ENCODE measurements at regions of chr7 and their contacts with region 1.

Region 1: DNA sequence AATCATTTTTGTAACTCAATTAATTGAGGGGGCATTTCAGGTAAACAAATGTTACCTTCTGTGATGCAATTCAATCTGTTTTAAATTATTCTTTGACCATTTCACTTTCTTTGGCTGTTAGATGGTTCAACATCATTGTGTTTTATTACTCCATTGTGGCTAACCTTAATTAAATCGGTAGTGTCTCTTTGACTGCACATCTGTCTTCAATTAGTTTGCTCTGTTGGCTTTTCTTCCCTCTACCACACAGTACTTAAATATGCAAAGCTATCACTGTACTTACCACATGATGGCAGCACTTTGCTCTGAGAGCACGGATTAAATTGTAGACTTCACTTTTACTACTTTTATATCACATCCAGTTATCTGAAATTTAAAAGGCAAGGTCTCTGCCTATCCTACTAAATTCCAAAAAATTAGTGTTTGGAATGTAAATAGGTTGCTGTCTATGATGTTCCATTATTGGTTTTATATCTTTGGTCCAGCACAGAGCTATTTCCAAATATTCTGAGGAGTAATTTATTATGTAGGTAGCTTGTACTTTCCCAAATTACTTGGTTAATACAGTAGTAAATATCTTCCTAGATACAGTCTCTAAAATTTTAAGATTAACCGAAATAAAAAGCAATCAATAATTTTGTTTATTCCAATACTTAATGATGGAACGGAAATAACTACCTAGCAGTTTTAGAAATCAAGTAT is 352.0 kb downstream of the PCLO start:
- DNase-seq: peak; percentile 15
- CTCF ChIP-seq: peak; percentile 74

Region 2: DNA sequence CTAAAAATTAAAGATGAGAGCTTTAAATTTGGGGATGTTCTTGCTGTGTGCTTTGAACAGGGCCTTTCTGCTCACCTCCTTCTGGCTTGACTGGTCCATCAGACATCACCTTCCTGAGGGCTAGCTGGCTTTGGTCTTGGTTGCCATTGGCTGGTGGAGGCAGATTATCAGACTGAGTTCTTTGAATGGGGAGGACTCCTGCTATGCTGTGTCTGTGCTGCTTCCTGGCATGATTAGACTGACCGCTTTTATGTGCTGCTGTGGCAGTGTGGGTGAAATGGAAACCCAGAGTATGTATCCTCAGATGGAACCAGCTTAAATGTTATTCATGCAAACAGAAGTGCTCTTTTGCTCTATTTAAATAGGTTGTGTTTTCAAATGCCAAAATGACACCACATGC is 10.3 kb after region 1 on chr7:
- CTCF ChIA-PET with region 1: interaction called, 19 read pairs
- POLR2A ChIA-PET with region 1: no interaction called
- DNase-seq: no peak
- CTCF ChIP-seq: no peak

Region 3: DNA sequence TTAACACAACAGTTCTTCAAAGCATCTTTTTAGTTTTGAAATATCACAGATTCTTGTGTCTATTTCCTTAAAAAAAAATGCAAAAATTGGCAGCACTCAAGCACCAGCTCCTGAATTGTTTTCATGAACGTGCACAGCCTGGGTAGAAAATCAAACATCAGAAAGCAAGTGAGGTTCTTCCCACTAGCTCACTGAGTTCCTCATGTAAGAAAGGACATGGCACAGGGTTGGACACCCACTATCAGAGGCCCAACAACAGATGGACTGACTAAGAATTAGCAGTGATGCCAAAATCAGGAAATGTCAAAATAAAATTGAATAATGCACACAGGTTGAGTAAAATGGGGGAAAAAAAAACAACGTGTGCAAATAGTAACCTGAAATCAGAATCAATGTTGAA is 205.2 kb after region 1 on chr7:
- CTCF ChIA-PET with region 1: no interaction called
- POLR2A ChIA-PET with region 1: no interaction called
- DNase-seq: no peak
- CTCF ChIP-seq: no peak

Region 4: DNA sequence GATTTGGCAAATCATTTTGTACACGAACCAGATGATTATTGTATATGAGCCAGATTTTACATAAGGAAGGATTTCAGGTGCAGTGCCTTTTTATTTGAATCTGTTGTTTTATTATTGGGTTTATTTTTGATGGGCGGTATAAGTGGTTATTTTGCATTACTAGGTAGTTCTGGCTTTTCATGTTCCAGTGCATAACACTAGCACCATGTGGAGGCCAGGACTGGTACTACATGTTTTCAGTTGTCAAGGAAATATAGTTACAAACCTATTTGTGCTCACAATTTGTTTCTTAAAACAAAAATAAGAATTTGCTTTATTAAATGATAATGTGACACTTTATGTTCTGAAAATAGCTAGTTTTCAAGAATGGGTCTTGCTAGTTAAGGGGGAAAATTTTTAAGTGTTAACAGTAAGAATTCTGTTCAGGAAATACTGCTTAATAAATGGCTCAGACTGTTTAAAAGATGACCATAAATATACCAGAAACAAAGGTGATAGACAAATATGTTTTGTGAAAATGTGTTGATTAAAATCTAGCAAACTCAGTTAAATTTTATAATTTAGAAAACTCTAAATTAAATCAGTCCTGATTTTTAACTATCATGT is 845.3 kb after region 1 on chr7:
- CTCF ChIA-PET with region 1: interaction called, 11 read pairs
- POLR2A ChIA-PET with region 1: no interaction called
- DNase-seq: peak; percentile 26
- CTCF ChIP-seq: peak; percentile 79